Common myeloid progenitor, CD34-positive (primary cell): ENCODE measurements at regions of chr17 and their contacts with region 1.

Region 1: GRCh38 chr17:76121932-76122430 is 18.4 kb upstream of the EXOC7 start:
- DNase-seq: peak in 2 of 3 donors; percentile 68 to 75
- H3K4me3 ChIP-seq: peak overlapping the region in 3 of 7 experiments; percentile 33 to 46 (median 43)
- H3K27ac ChIP-seq: no peak overlapping the region
- H3K4me1 ChIP-seq: peaks cover 0 to 15% (median 14%) of the 10 kb centered on the region in 4 experiments
- H3K27me3 ChIP-seq: no peaks in the 10 kb centered on the region

Region 2: GRCh38 chr17:76132574-76133338 is 10.8 kb after region 1 on chr17:
- CTCF ChIA-PET with region 1: interaction called, 32 read pairs
- POLR2A ChIA-PET with region 1: interaction called, 3 read pairs
- DNase-seq: no peak
- H3K4me3 ChIP-seq: no peak overlapping the region
- H3K27ac ChIP-seq: no peak overlapping the region
- H3K4me1 ChIP-seq: peaks cover 0 to 11% (median 10%) of the 10 kb centered on the region in 4 experiments
- H3K27me3 ChIP-seq: no peaks in the 10 kb centered on the region

Region 3: GRCh38 chr17:76182016-76182764 is 60.2 kb after region 1 on chr17:
- CTCF ChIA-PET with region 1: interaction called, 21 read pairs
- POLR2A ChIA-PET with region 1: no interaction called
- DNase-seq: peak; percentile 95 to 98 (median 97)
- H3K4me3 ChIP-seq: no peak overlapping the region
- H3K27ac ChIP-seq: no peak overlapping the region
- H3K4me1 ChIP-seq: peaks cover 0 to 7% (median 3%) of the 10 kb centered on the region in 4 experiments
- H3K27me3 ChIP-seq: no peaks in the 10 kb centered on the region

Region 4: DNA sequence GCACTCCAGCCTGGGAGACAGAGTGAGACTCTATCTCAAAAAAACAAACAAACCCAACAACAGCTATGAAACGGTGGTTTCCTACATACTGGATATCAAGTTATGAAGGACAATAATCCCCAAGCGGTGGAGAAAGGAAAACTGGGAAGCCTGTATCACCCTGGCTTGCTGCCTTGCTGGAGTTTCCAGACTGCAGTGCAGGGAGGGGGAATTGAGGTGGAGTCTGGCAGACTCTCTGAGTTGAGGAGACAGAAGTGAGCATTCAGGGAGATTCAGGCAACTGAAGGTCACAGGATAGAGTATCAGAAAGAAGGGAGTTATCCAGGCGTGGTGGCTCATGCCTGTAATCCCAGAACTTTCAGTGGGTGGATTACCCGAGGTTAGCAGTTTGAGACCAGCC is 174.2 kb after region 1 on chr17:
- CTCF ChIA-PET with region 1: interaction called, 12 read pairs
- POLR2A ChIA-PET with region 1: no interaction called
- DNase-seq: no peak
- H3K4me3 ChIP-seq: no peak overlapping the region
- H3K27ac ChIP-seq: no peak overlapping the region
- H3K4me1 ChIP-seq: no peaks in the 10 kb centered on the region
- H3K27me3 ChIP-seq: no peaks in the 10 kb centered on the region